ENCODE measurements at regions of chr12 and their contacts with region 1.

Region 1: GRCh38 chr12:53727310-53728041 is at the start of gene CALCOCO1:
- DNase-seq: peak; percentile 99
- ATAC-seq: peak; percentile 98
- H3K4me3 Mint-ChIP-seq: peak within 1 kb of the TSS; percentile 87
- H3K27ac Mint-ChIP-seq: peak within 1 kb of the TSS; percentile 90
- H3K4me1 Mint-ChIP-seq: peaks cover 26% of the 10 kb centered on the region
- H3K27me3 Mint-ChIP-seq: peaks cover 2% of the 10 kb centered on the region
- total RNA-seq, gene CALCOCO1: 39.0 to 40.0 TPM

Region 2: DNA sequence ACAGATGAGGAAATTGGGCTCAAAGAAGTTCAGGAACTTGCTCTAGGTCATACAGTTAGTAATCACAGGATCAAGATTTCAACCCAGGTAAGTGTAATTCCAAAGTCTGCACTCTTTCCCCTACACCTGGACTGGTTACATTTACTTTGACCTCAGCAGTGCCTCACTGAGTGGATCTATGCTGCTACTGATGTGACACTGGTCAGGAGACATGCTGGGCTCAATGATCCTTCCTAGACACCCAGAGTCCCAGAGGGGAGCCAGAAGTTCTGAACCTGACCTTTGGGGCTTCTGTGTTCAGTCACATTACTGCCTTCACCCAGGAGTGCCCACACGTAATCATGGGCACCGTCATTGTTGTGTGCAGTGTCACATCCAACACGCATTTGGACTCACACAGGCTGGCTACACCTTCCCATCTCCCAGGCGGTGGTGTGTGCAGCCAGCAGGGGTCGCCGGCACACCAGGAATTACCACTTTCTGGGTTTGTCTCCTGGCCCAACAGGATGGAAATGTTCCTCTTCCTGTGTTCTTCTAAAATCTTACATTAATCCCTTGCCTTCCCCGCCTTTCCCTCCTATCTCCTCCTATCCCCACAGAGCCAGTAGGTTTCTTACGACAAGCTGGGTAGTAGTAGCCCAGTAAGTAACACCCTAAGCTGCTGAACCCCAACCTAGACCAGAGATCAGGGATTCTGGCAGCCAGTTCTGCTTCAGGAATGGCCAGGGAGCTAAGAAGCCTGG is 25.8 kb before region 1 on chr12:
- CTCF ChIA-PET with region 1: interaction called, 14 read pairs
- DNase-seq: peak; percentile 81
- ATAC-seq: peak; percentile 90
- H3K4me3 Mint-ChIP-seq: no peak overlapping the region
- H3K27ac Mint-ChIP-seq: no peak overlapping the region
- H3K4me1 Mint-ChIP-seq: peaks cover 4% of the 10 kb centered on the region
- H3K27me3 Mint-ChIP-seq: peaks cover 91% of the 10 kb centered on the region

Region 3: GRCh38 chr12:53757095-53757770 is 29.8 kb after region 1 on chr12:
- CTCF ChIA-PET with region 1: interaction called, 10 read pairs
- DNase-seq: peak; percentile 92
- ATAC-seq: peak; percentile 93
- H3K4me3 Mint-ChIP-seq: peak overlapping the region; percentile 52
- H3K27ac Mint-ChIP-seq: peak overlapping the region; percentile 70
- H3K4me1 Mint-ChIP-seq: peaks cover 19% of the 10 kb centered on the region
- H3K27me3 Mint-ChIP-seq: peaks cover 40% of the 10 kb centered on the region